T-cell (primary cell): ENCODE measurements at regions of chr17 and their contacts with region 1.

Region 1: GRCh38 chr17:10699856-10700255 is 2.5 kb downstream of the ADPRM start:
- DNase-seq: peak in 27 of 35 experiments; percentile 3 to 66 (median 30)
- ATAC-seq: peak; percentile 41 to 52 (median 44)
- H3K4me3 ChIP-seq: peak overlapping the region in 1 of 2 donors; percentile 5
- H3K4me3 Mint-ChIP-seq: peak overlapping the region; percentile 61 to 93 (median 68)
- H3K27ac ChIP-seq: peak overlapping the region; percentile 84
- H3K27ac Mint-ChIP-seq: peak overlapping the region; percentile 90
- H3K4me1 ChIP-seq: peaks cover 32 to 46% of the 10 kb centered on the region in 2 experiments
- H3K4me1 Mint-ChIP-seq: peaks cover 69 to 77% (median 73%) of the 10 kb centered on the region in 3 donors
- H3K27me3 ChIP-seq: no peaks in the 10 kb centered on the region
- H3K27me3 Mint-ChIP-seq: no peaks in the 10 kb centered on the region

Region 2: DNA sequence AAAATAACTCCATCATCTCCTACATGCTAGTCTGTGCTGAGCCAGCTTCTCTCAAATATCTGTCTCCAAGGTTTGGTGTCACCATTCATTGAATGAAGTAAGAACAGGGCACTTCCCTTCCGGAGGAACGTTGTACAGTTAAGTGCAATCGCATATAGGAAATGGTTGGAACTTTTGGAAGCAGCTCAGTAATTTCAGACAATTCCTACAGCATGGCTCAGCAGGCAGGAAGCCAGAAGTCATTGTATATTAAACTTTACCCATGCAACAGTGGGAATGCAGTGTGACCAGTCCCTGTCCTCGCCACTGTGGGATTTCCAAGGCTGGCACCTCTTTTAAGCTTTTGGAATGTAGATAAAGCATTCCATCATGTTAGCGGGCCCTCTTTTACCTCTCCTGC is 99.3 kb before region 1 on chr17:
- CTCF ChIA-PET with region 1: no interaction called
- POLR2A ChIA-PET with region 1: no interaction called
- DNase-seq: no peak
- ATAC-seq: no peak
- H3K4me3 ChIP-seq: no peak overlapping the region
- H3K4me3 Mint-ChIP-seq: no peak overlapping the region
- H3K27ac ChIP-seq: no peak overlapping the region
- H3K27ac Mint-ChIP-seq: no peak overlapping the region
- H3K4me1 ChIP-seq: no peaks in the 10 kb centered on the region
- H3K4me1 Mint-ChIP-seq: no peaks in the 10 kb centered on the region
- H3K27me3 ChIP-seq: peaks cover 0 to 7% of the 10 kb centered on the region in 2 experiments
- H3K27me3 Mint-ChIP-seq: peaks cover 13 to 16% of the 10 kb centered on the region in 2 donors

Region 3: DNA sequence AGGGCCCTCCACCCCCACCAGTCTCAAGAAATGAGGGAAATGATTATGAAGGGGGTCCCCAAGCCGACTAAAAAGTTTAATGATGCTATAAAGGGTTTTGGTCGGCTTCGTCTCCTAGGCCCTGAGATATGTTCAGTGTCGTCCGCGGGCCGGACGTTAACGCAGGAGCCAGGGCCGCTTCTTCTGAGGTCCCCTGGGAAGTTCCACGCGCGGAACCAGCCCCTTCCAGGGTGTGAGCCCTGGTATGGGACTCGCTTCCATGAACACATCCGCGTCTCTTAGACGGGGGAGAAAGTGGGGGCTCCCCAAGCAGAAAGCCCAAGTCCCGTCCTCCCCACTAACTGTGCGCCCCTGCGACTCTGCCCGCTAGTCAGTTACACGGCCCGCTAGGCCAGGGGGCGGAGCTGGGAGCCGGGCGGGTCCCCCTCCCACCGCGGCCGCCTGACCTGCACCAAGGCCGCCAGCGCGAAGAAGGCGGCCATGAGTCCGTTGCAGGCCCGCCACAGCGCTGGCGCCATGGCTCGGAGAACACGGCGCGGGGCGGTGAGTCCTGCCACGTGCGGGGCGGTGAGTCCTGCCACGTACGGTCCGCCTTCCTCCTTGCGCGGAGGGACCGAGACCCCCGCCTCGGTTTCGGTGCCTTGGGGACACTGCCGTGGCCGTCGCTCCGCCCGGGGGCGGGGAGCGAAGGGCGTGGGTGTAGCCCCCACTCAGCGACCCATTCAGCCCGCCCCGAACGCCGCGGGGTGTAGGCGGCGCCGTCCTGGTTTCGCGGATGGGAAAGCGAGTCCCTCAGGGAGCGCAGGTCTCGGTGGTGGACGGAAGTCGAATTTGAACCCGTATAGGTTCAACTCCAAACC is 29.7 kb after region 1 on chr17 and contains the start of gene TMEM220:
- CTCF ChIA-PET with region 1: no interaction called
- POLR2A ChIA-PET with region 1: interaction called in 1 of 2 experiments, 12 read pairs
- DNase-seq: peak in 23 of 35 experiments; percentile 3 to 45 (median 15)
- ATAC-seq: peak; percentile 74 to 83 (median 78)
- H3K4me3 ChIP-seq: peak within 1 kb of the TSS; percentile 64 to 80
- H3K4me3 Mint-ChIP-seq: peak within 1 kb of the TSS; percentile 88 to 96 (median 91)
- H3K27ac ChIP-seq: no peak within 1 kb of the TSS
- H3K27ac Mint-ChIP-seq: peak within 1 kb of the TSS; percentile 59 to 80
- H3K4me1 ChIP-seq: peaks cover 0 to 11% of the 10 kb centered on the region in 2 experiments
- H3K4me1 Mint-ChIP-seq: peaks cover 14 to 17% (median 17%) of the 10 kb centered on the region in 3 donors
- H3K27me3 ChIP-seq: peaks cover 0 to 21% of the 10 kb centered on the region in 2 experiments
- H3K27me3 Mint-ChIP-seq: peaks cover 0 to 5% of the 10 kb centered on the region in 2 donors
- total RNA-seq, gene TMEM220: 1.8 to 4.7 (median 3.5) TPM

Region 4: GRCh38 chr17:10775058-10775457 is 75.2 kb after region 1 on chr17:
- CTCF ChIA-PET with region 1: no interaction called
- POLR2A ChIA-PET with region 1: no interaction called
- DNase-seq: no peak
- ATAC-seq: no peak
- H3K4me3 ChIP-seq: no peak overlapping the region
- H3K4me3 Mint-ChIP-seq: no peak overlapping the region
- H3K27ac ChIP-seq: no peak overlapping the region
- H3K27ac Mint-ChIP-seq: no peak overlapping the region
- H3K4me1 ChIP-seq: no peaks in the 10 kb centered on the region
- H3K4me1 Mint-ChIP-seq: no peaks in the 10 kb centered on the region
- H3K27me3 ChIP-seq: no peaks in the 10 kb centered on the region
- H3K27me3 Mint-ChIP-seq: peaks cover 0 to 1% of the 10 kb centered on the region in 2 donors